ENCODE measurements at regions of chr15 and their contacts with region 1.

Region 1: GRCh38 chr15:73964736-73965093 is 27.4 kb downstream of the STOML1 start:
- DNase-seq: peak; percentile 89
- H3K4me3 Mint-ChIP-seq: peak overlapping the region; percentile 50
- H3K27ac Mint-ChIP-seq: peak overlapping the region; percentile 85
- H3K4me1 Mint-ChIP-seq: peaks cover 46% of the 10 kb centered on the region
- H3K27me3 Mint-ChIP-seq: peaks cover 4% of the 10 kb centered on the region

Region 2: GRCh38 chr15:73608941-73609340 is 355.8 kb before region 1 on chr15:
- CTCF ChIA-PET with region 1: no interaction called
- POLR2A ChIA-PET with region 1: no interaction called
- DNase-seq: no peak
- H3K4me3 Mint-ChIP-seq: no peak overlapping the region
- H3K27ac Mint-ChIP-seq: no peak overlapping the region
- H3K4me1 Mint-ChIP-seq: peaks cover 27% of the 10 kb centered on the region
- H3K27me3 Mint-ChIP-seq: no peaks in the 10 kb centered on the region

Region 3: DNA sequence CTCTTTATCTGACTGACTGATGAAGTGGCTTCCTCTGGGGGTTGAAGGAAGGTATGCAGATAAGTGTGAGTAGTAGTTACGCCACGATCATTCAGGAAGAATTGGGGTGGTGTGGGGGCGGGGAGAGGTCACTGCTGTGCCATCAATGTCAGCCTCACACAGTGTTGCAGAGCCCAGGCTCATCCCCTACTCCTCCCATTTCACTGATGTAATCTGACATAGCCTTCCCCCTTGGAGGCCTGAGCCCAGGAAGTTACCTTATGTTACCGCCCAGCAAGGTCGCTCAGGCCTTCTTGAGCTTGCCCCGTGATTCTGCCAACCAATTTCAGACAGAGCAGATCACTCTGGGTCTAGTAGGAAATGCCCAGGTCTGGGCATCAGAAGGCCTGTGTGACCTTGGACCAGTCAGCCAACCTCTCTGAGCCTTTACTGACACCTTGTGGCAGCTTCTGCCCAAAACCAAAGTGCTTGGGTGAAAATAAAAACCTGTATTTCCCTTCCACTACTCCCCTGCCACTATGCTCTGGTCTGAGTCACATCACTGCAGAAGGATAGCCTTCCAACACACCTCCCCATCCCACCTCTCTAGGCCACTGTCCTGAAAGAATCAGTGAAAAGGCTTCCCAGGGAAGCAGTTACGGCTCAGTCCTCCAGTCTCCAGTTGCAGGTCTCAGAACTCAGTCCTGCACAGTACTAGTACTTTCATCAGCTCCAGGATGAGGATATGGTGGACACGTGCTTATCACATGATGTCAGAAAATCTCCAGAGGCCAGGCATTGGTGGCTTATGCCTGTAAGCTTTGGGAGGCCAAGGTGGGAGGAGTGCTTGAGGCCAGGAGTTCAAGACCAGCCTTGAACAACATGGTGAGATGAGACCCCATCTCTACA is 183.4 kb before region 1 on chr15:
- CTCF ChIA-PET with region 1: no interaction called
- POLR2A ChIA-PET with region 1: no interaction called
- DNase-seq: peak; percentile 6
- H3K4me3 Mint-ChIP-seq: no peak overlapping the region
- H3K27ac Mint-ChIP-seq: no peak overlapping the region
- H3K4me1 Mint-ChIP-seq: no peaks in the 10 kb centered on the region
- H3K27me3 Mint-ChIP-seq: no peaks in the 10 kb centered on the region

Region 4: GRCh38 chr15:73950831-73951561 is 13.7 kb before region 1 on chr15:
- CTCF ChIA-PET with region 1: interaction called, 37 read pairs
- POLR2A ChIA-PET with region 1: interaction called, 3 read pairs
- DNase-seq: peak; percentile 77
- H3K4me3 Mint-ChIP-seq: no peak overlapping the region
- H3K27ac Mint-ChIP-seq: peak overlapping the region; percentile 88
- H3K4me1 Mint-ChIP-seq: peaks cover 16% of the 10 kb centered on the region
- H3K27me3 Mint-ChIP-seq: no peaks in the 10 kb centered on the region

Measured in activated CD4-positive, alpha-beta T cell treated with anti-CD3 and anti-CD28 coated beads, Interleukin-2, amount 10 ng/mL, durations not matched to agents 7 days and 5 days (primary cell).